Lower leg skin (tissue), 4 donors: ENCODE measurements at regions of chr21 and their contacts with region 1.

Region 1: DNA sequence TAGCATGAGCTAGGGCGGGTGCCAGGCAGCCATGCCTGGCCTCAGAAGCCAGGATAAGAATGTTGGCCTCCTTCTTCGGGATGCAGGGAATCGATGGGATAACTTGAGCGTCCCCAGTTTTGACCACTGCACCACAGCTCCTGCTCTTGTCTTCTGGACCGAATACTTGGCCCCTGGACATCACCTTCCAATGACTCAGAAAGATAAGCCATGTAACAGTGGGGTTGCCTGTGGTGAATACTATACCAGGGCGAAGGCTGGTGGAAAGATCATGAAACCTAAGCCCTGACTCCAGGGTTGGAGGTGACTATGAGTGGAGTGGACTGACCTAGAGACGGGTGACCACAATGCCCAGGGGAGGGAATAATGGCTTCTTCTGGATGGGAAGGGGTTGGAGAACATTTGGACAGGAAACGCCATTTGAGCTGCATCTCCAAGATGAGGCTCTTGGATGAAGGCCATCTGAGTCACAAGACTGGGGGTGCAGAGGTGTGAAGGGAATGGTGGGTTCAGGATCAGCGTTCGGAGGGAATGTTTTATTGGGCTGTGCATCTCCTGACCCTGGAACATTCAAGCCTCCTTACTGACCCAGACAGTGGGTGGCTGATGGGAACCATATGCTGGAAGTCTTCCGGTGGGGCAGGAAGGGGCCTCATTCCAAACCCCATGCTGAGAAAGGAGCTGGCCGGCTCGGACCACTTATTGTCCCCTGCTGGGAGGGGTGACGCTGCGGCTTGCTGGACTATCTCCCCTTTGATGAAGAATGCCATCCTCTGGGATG is 18.5 kb upstream of the KCNE2 start:
- DNase-seq: peak in 1 of 2 donors; percentile 82
- H3K4me3 ChIP-seq: no peak overlapping the region
- CTCF ChIP-seq: no peak
- POLR2A ChIP-seq: no peak

Region 2: GRCh38 chr21:33924079-33924765 is 421.1 kb before region 1 on chr21:
- intact Hi-C with region 1: loop called (anchors 5 kb)
- DNase-seq: peak; percentile 90 to 98
- H3K4me3 ChIP-seq: no peak overlapping the region
- CTCF ChIP-seq: peak in 1 of 3 donors; percentile 68
- POLR2A ChIP-seq: no peak

Region 3: DNA sequence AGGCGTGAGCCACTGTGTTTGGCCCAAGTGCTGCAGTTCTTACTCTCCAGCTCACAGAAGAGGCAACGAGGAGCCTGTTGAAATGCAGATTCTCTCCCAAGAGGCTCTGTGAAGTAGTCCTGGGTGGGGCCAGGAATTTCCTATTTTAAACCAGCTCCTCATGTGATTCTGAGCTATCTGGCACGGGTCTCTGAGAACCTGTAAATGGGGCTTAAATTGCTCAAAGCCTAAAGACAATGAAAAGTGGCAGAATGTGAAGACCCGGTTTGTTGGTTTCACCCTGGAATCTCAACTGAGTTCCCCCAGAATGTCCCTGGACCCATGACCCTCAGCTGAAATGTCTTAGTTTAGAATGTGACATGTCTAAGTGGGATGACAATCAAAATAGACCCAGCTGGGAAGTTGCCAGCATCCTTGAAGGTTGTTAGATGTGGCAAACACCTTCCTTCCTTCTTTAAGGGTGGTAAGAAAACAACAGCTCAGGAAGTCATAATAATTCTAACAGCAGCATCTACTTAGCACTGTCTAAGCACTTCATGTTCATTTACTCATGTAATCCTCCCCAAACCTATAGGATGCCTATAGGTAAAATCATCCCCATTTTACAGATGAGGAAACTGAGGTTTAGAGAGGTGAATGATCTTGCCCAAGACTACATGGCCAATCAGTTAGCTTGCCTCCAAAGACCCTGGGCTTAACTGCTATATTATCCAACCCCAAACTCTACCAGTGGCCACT is 408.8 kb before region 1 on chr21:
- intact Hi-C with region 1: no loop called
- DNase-seq: peak; percentile 60 to 87
- H3K4me3 ChIP-seq: no peak overlapping the region
- CTCF ChIP-seq: no peak
- POLR2A ChIP-seq: no peak